ENCODE measurements at regions of chr1 and their contacts with region 1.

Region 1: DNA sequence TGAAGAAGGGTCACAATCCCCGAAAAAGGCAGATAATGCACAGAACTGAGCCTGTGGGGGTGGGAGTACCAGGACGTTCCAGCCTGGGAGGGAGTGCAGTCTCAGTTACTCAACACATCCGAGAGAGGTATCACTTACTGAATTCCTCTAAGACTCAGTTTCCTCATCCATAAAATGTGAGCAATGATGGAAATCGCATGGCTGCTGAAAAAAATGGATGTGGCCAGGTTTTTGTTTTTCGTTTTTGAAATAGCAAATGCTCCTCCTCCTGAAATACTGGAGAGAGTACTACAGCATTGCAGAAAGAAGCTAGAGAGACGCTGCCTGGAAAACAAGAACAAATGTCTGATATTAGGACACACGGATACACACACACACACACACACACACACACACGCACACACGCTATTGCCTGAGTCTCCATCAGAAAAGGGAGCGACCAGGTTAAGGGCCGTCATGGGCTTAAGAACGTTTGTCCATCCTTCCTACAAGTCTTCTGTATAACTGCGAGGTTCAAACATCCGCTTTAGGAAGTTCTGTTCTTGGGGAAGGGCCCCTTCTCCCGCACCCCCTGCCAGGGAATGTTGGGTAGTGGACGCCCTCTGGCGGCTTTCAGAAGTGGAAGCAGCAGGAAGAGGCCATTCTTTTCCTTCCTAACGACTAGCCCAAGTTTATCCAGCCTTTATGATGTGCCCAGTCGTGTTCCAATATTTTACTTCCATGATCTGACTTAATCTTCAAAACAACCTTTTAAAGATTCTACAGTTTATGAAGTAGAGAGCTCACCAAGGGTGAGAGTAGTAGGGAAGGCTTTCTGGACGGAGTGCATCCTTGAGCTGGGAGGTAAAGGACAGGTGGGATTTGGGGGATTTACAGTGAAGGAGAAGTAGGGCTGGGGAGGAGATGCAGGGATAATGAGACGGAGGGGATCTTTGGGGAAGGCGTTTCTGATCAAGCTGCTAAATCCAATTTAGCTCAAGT is 699 bp upstream of the NES start:
- DNase-seq: peak; percentile 89
- ATAC-seq: peak; percentile 45
- H3K4me3 ChIP-seq: peak overlapping the region; percentile 25; the same call in 1 of the 2 replicates
- H3K27ac ChIP-seq: peak overlapping the region; percentile 70
- H3K4me1 ChIP-seq: peaks cover 31% of the 10 kb centered on the region
- H3K27me3 ChIP-seq: peaks cover 23% of the 10 kb centered on the region
- CTCF ChIP-seq: peak; percentile 98
- POLR2A ChIP-seq: 0 out of 2 replicates have a peak, but pooled peaks have one; percentile 41
- RAD21 ChIP-seq: peak; percentile 96

Region 2: DNA sequence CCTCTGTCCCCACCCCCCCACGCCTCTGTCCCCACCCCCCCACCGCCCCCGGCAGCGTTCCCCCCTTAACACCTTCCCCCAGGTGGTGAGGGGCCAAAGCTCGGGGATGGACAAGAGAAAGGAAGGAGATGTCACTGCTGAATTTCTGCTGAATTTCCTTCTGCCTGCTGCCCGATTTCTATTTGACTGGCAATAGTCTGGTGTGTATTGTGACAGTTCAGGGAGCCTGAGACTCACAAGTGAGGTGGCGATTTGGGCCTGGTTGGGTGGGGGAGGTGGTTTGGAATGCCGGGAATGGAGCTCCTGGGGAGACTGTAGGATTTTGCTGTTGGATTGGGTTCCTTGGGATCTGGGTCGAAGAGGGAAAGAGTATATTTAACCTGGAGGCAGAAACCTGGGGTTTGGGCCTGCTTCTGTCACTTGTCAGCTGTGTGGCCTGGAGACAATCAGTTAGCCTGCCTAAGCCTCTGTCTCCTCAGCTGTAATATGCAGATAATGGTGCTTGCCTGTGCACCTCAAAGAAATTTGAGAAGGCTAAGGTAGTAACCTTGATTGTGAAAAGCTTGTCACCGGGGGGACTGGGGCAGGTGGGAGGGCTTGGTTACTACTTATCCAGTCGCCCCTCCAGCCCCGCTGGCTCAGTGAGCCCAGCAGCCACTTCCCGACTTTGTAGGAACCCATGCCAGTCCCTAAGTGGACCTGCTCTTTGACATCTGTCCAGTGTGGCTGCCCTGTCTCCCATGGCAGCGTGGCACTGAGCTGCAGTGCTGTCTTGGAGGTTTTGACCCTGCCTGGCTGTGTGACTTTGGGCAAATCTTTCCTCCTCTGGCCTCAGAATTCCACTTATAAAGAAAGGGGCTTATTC is 571.0 kb before region 1 on chr1:
- CTCF ChIA-PET with region 1: no interaction called
- POLR2A ChIA-PET with region 1: interaction called, 11 read pairs
- dilution Hi-C with region 1: no loop called
- in situ Hi-C with region 1: no loop called
- intact Hi-C with region 1: no loop called
- DNase-seq: peak; percentile 40
- ATAC-seq: peak; percentile 15
- H3K4me3 ChIP-seq: peak overlapping the region; percentile 14; the same call in 1 of the 2 replicates
- H3K27ac ChIP-seq: peak overlapping the region; percentile 35
- H3K4me1 ChIP-seq: peaks cover 45% of the 10 kb centered on the region
- H3K27me3 ChIP-seq: no peaks in the 10 kb centered on the region
- CTCF ChIP-seq: no peak
- POLR2A ChIP-seq: no peak
- RAD21 ChIP-seq: no peak

Region 3: GRCh38 chr1:156625436-156626078 is 52.3 kb before region 1 on chr1:
- CTCF ChIA-PET with region 1: interaction called, 9 read pairs
- POLR2A ChIA-PET with region 1: no interaction called
- dilution Hi-C with region 1: no loop called
- in situ Hi-C with region 1: no loop called
- intact Hi-C with region 1: loop called (anchors 1 kb)
- DNase-seq: peak; percentile 28
- ATAC-seq: peak; percentile 71
- H3K4me3 ChIP-seq: no peak overlapping the region
- H3K27ac ChIP-seq: no peak overlapping the region
- H3K4me1 ChIP-seq: peaks cover 4% of the 10 kb centered on the region
- H3K27me3 ChIP-seq: peaks cover 54% of the 10 kb centered on the region
- CTCF ChIP-seq: peak; percentile 68
- POLR2A ChIP-seq: no peak
- RAD21 ChIP-seq: peak; percentile 65

Region 4: GRCh38 chr1:156659994-156660751 is 17.7 kb before region 1 on chr1:
- CTCF ChIA-PET with region 1: interaction called, 25 read pairs
- POLR2A ChIA-PET with region 1: interaction called, 29 read pairs
- dilution Hi-C with region 1: no loop called
- in situ Hi-C with region 1: no loop called
- intact Hi-C with region 1: loop called (anchors 1 kb)
- DNase-seq: peak; percentile 98
- ATAC-seq: peak; percentile 77
- H3K4me3 ChIP-seq: no peak overlapping the region
- H3K27ac ChIP-seq: peak overlapping the region; percentile 69
- H3K4me1 ChIP-seq: peaks cover 48% of the 10 kb centered on the region
- H3K27me3 ChIP-seq: peaks cover 20% of the 10 kb centered on the region
- CTCF ChIP-seq: peak; percentile 99
- POLR2A ChIP-seq: no peak
- RAD21 ChIP-seq: peak; percentile 94

Region 5: GRCh38 chr1:156717275-156717805 is 39.4 kb after region 1 on chr1:
- CTCF ChIA-PET with region 1: no interaction called
- POLR2A ChIA-PET with region 1: interaction called, 13 read pairs
- dilution Hi-C with region 1: no loop called
- in situ Hi-C with region 1: no loop called
- intact Hi-C with region 1: no loop called
- DNase-seq: no peak
- ATAC-seq: no peak
- H3K4me3 ChIP-seq: no peak overlapping the region
- H3K27ac ChIP-seq: no peak overlapping the region
- H3K4me1 ChIP-seq: peaks cover 4% of the 10 kb centered on the region; the same call in 1 of the 2 replicates
- H3K27me3 ChIP-seq: no peaks in the 10 kb centered on the region
- CTCF ChIP-seq: no peak
- POLR2A ChIP-seq: no peak
- RAD21 ChIP-seq: no peak

Region 6: GRCh38 chr1:156740679-156741612 is 63.0 kb after region 1 on chr1 and contains the start of gene MRPL24:
- CTCF ChIA-PET with region 1: no interaction called
- POLR2A ChIA-PET with region 1: no interaction called
- dilution Hi-C with region 1: no loop called
- in situ Hi-C with region 1: no loop called
- intact Hi-C with region 1: no loop called
- DNase-seq: peak; percentile 99
- ATAC-seq: peak; percentile 93
- H3K4me3 ChIP-seq: peak within 1 kb of the TSS; percentile 56
- H3K27ac ChIP-seq: peak within 1 kb of the TSS; percentile 62
- H3K4me1 ChIP-seq: peaks cover 2% of the 10 kb centered on the region; the same call in 1 of the 2 replicates
- H3K27me3 ChIP-seq: no peaks in the 10 kb centered on the region
- CTCF ChIP-seq: no peak
- POLR2A ChIP-seq: peak; percentile 55; the same call in 1 of the 2 replicates
- RAD21 ChIP-seq: no peak
- total RNA-seq, gene MRPL24: 65.3 and 68.8 TPM in 2 replicates

Region 7: DNA sequence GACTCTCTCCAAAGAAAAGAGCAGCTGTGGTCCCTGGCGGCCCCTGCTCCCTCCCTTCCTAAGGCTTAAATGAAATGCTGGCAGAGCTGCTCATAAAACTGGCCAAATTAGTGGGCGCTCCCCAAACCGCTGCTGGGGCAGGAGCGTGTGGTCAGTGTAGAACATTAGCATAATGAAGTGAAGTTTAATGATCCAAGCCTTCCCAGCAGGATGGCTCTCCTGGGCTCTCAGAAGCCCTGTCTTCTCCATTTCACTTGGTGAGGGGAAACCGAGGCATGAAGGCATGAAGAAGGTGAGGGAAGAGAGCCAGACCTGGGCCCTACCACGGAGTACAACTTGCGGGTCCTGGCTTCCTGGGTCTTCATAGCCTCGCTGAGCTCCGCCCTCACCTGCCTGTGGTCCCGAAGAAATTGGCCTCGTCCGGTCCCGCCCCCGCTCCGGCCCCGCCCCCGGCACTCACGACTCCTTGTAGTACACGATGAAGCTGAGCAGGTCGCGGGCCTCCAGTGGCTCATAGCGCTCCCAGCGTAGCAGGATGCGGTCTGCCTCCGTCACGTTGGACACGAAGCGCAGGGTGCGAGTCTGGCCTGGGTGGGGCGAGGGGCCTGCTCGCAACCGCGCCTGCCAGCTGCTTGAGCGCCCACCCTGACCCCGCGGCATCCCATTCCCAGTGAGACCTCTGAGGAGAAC is 170.7 kb after region 1 on chr1:
- CTCF ChIA-PET with region 1: no interaction called
- POLR2A ChIA-PET with region 1: no interaction called
- dilution Hi-C with region 1: no loop called
- in situ Hi-C with region 1: no loop called
- intact Hi-C with region 1: no loop called
- DNase-seq: no peak
- ATAC-seq: no peak
- H3K4me3 ChIP-seq: no peak overlapping the region
- H3K27ac ChIP-seq: no peak overlapping the region
- H3K4me1 ChIP-seq: peaks cover 3% of the 10 kb centered on the region; the same call in 1 of the 2 replicates
- H3K27me3 ChIP-seq: peaks cover 87% of the 10 kb centered on the region
- CTCF ChIP-seq: no peak
- POLR2A ChIP-seq: no peak
- RAD21 ChIP-seq: no peak

Region 8: DNA sequence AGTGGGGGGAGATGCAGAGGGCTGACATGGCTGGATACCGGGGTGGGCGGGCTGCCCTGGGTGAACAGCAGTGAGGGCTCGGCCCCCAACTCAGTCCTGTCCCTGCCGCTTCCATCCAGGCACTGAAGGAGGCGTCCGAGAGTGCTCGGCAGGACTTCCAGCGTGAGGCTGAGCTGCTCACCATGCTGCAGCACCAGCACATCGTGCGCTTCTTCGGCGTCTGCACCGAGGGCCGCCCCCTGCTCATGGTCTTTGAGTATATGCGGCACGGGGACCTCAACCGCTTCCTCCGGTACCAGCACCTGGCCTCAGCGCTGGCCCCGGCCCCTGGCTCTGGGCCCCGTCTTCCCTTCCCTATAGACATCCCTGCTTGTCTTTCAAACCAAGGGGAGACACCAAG is 198.4 kb after region 1 on chr1:
- CTCF ChIA-PET with region 1: no interaction called
- POLR2A ChIA-PET with region 1: no interaction called
- dilution Hi-C with region 1: no loop called
- in situ Hi-C with region 1: no loop called
- intact Hi-C with region 1: no loop called
- DNase-seq: no peak
- ATAC-seq: no peak
- H3K4me3 ChIP-seq: no peak overlapping the region
- H3K27ac ChIP-seq: no peak overlapping the region
- H3K4me1 ChIP-seq: no peaks in the 10 kb centered on the region; the same call in 1 of the 2 replicates
- H3K27me3 ChIP-seq: peaks cover 67% of the 10 kb centered on the region
- CTCF ChIP-seq: peak; percentile 13; the same call in 1 of the 2 replicates
- POLR2A ChIP-seq: no peak
- RAD21 ChIP-seq: no peak